Lower leg skin (tissue), 4 donors: ENCODE measurements at regions of chr1 and their contacts with region 1.

Region 1: GRCh38 chr1:5509664-5510452 is 482.4 kb downstream of the NPHP4 start:
- DNase-seq: peak in 1 of 2 donors; percentile 91
- H3K4me3 ChIP-seq: no peak overlapping the region
- CTCF ChIP-seq: peak in 2 of 3 donors; percentile 78 to 84
- POLR2A ChIP-seq: no peak

Region 2: GRCh38 chr1:5660141-5660935 is 150.5 kb after region 1 on chr1:
- intact Hi-C with region 1: no loop called
- DNase-seq: peak; percentile 41 to 77
- H3K4me3 ChIP-seq: no peak overlapping the region
- CTCF ChIP-seq: no peak
- POLR2A ChIP-seq: no peak

Region 3: DNA sequence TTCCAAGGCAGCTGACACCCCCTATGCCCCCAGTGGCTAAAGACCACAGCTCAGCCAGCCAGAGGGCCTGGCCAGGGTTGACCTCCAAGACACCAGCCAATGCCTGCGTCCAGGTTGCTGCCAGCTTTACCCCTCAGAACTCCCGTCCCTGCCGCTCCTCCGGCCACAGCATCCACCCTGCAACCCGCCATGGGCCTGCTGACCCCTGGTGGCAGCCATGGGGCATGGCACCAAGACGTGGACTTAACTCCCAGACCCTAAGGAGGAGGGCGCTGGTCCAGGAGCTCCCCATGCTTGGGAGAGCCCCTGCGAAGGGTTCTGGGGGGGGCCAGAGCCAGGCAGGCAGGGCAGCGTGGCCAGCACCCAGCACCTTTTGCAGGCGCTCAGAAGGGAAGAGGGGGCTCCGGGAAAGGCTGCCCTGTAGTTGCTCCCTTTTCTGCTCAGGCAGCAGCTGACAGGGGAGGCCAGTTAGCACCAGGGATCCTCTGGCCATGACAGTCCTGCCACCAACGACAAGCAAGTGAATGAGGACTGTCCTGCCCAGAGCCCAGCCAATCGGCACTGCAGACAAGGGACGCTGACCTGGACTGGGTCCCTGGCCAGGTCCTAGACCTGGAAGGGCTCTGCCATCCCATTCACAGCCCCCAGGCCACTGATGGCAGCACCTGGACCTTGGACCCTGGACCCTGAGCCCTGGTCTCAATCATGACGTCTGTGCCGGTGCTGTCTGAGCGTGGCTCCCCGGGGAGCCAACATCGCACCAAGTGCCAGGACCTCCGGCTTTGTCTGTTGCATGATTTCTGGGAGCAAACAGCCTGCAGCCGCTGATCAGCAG is 236.1 kb after region 1 on chr1:
- intact Hi-C with region 1: loop called (anchors 5 kb)
- DNase-seq: peak in 1 of 2 donors; percentile 55
- H3K4me3 ChIP-seq: no peak overlapping the region
- CTCF ChIP-seq: peak in 1 of 3 donors; percentile 39
- POLR2A ChIP-seq: no peak